ENCODE measurements at regions of chr12 and their contacts with region 1.

Region 1: DNA sequence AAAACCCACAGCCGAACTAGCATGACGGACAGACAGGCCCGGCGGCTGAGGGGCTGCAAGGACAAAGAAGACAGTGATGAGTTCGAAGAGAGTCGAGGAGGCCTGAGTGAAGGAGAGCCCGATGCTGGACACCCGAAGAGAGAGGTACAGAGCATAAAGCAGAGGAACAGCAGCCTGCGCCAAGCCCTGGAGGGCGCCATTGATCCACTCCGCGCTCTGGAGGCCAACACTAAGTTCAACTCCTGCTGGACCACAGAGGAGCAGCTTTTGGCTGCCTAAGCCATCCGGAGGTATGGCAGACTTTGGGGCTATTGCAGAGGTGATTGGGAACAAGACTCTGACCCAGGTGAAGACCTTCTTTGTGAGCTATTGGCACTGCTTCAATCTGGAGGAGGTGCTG is 7.8 kb upstream of the PLXNC1 start:
- DNase-seq: peak; percentile 72
- H3K4me3 Mint-ChIP-seq: no peak overlapping the region
- H3K27ac Mint-ChIP-seq: no peak overlapping the region
- H3K4me1 Mint-ChIP-seq: peaks cover 3% of the 10 kb centered on the region
- H3K27me3 Mint-ChIP-seq: no peaks in the 10 kb centered on the region

Region 2: GRCh38 chr12:94762259-94762942 is 621.8 kb after region 1 on chr12:
- CTCF ChIA-PET with region 1: no interaction called
- POLR2A ChIA-PET with region 1: no interaction called
- intact Hi-C with region 1: loop called (anchors 2 kb)
- DNase-seq: no peak
- H3K4me3 Mint-ChIP-seq: no peak overlapping the region
- H3K27ac Mint-ChIP-seq: no peak overlapping the region
- H3K4me1 Mint-ChIP-seq: peaks cover 7% of the 10 kb centered on the region
- H3K27me3 Mint-ChIP-seq: peaks cover 5% of the 10 kb centered on the region